ENCODE measurements at regions of chr2 and their contacts with region 1.

Region 1: DNA sequence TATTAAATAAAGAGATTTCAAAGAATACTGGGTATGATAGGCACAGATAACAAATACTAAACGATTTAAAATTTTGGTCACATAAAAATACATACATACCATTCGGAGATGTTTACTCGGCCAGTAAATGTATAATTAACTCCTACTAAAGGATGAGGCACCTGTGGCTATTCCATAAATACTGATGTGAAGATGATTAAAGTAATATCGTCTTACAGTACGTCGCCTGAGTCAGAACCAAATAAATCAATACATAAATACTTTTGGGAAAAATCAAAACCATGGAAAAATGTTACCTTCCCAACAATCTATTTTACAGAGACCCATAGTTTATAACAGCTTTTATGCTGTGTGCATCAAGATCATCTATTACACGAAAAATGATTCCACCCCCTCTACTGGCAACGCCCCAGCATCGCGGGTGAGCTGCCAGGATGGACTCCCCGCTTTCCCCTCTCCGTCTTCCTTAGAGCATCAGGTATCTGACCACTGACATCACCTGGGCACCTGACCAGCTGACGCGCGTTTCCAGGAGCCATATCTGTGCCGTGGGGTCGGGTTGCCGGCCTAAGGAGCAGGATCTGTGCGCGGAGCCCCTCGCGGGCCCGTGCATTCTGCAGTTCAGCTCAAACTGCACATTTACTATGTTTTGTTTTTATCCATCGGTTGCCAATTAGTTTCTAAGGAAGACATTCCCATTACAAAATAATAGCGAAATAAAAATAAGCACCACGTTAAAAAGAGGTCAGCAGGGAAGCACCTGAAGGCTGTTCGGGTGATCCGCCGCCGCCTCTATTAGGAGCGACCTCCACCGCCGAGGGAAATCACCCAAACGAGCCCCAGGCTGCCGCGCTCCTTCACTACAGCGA is 901 bp downstream of the ICA1L start:
- DNase-seq: peak; percentile 44 to 57 (median 51)
- H3K4me3 ChIP-seq: peak overlapping the region; percentile 59 to 62
- H3K4me3 Mint-ChIP-seq: peak overlapping the region; percentile 87 to 97 (median 94)
- H3K27ac ChIP-seq: peak overlapping the region; percentile 51
- H3K27ac Mint-ChIP-seq: peak overlapping the region in 6 of 7 donors; percentile 18 to 71 (median 59)
- H3K4me1 ChIP-seq: peaks cover 3% of the 10 kb centered on the region
- H3K4me1 Mint-ChIP-seq: peaks cover 5 to 13% (median 9%) of the 10 kb centered on the region in 4 donors
- H3K27me3 ChIP-seq: no peaks in the 10 kb centered on the region
- H3K27me3 Mint-ChIP-seq: no peaks in the 10 kb centered on the region

Region 2: GRCh38 chr2:202831242-202832220 is 39.1 kb before region 1 on chr2:
- CTCF ChIA-PET with region 1: interaction called, 7 read pairs
- POLR2A ChIA-PET with region 1: no interaction called
- intact Hi-C with region 1: loop called (anchors 1 kb)
- DNase-seq: peak; percentile 46 to 54 (median 48)
- H3K4me3 ChIP-seq: no peak overlapping the region
- H3K4me3 Mint-ChIP-seq: peak overlapping the region in 4 of 8 donors; percentile 30 to 71 (median 38)
- H3K27ac ChIP-seq: no peak overlapping the region
- H3K27ac Mint-ChIP-seq: peak overlapping the region in 5 of 7 donors; percentile 26 to 91 (median 42)
- H3K4me1 ChIP-seq: peaks cover 9% of the 10 kb centered on the region
- H3K4me1 Mint-ChIP-seq: peaks cover 9 to 11% (median 9%) of the 10 kb centered on the region in 4 donors
- H3K27me3 ChIP-seq: no peaks in the 10 kb centered on the region
- H3K27me3 Mint-ChIP-seq: no peaks in the 10 kb centered on the region

Measured in CD4-positive, alpha-beta memory T cell (primary cell).